ENCODE measurements at regions of chr2 and their contacts with region 1.

Region 1: GRCh38 chr2:131105156-131105949 is at the start of gene PLEKHB2:
- DNase-seq: peak; percentile 97
- ATAC-seq: peak; percentile 90
- total RNA-seq, gene PLEKHB2: 30.8 TPM

Region 2: GRCh38 chr2:131093006-131093695 is 12.2 kb before region 1 on chr2 and contains the start of gene FAM168B:
- intact Hi-C with region 1: loop called (anchors 1 kb)
- DNase-seq: peak; percentile 94
- ATAC-seq: peak; percentile 97
- total RNA-seq, gene FAM168B: 85.6 TPM